AG04449 (cell line): ENCODE measurements at regions of chr4 and their contacts with region 1.

Region 1: DNA sequence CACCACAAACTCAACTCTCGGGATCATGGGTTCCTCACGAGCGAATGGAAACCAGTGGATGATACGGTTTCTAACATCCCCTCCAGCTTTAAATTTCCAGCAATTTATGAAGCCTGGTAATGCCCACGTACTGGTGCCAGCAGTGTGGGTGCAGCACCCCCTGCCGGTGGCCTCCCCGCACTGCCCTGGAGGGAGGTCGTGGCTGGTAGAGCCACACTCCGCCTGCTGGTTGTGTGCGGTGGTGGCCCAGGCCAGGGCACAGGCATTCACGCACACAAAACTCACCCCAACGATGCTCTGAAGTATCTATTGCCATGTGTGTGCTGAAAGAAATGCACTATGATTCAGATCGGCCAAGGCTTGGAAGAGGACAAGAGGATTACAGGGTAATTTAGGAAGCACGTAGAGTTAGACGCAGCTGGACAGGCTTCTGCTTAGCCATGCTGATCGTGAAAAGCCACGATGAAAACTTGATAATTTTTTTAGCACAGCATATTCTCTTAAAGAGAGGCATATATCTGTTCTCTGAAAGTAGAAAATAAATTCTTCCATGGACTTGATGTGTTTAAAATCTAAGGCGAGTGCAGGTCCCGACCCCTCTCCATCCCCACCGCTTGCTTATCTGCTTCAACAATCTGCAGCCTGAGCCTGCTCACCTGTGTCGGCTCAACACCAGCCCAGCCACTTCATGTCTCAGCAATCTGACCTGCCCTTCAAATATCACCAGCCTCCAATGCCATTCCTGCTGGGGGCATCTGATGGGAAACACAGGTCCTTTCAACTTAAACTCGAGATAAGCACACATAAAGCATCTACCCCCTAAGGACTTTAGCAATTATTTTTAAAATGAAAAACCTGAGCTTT is 59.0 kb downstream of the SCD5 start:
- DNase-seq: no peak
- H3K4me3 ChIP-seq: no peak overlapping the region
- CTCF ChIP-seq: peak; percentile 100

Region 2: DNA sequence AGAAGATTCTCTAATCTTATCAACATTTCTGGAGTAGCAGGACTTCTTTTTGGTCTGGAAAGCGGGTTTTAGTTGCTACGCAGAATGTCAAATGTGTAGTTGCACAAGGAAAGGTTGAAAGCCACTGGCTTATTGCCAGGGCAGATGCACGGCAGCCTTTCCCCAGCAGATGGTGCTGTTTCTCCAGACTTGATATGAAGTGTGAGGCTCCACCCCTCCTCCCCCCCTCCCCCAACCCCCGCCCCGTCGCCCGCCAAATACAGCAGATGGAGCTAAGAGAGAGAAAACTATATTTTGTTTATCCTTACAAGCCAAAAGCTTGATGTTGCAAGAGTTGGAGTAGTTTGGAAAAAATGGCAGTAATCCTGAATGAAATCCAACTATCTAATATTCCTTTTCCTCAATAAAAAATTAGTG is 277.1 kb before region 1 on chr4:
- CTCF ChIA-PET with region 1: interaction called, 168 read pairs
- POLR2A ChIA-PET with region 1: no interaction called
- DNase-seq: peak; percentile 34
- H3K4me3 ChIP-seq: no peak overlapping the region
- CTCF ChIP-seq: peak; percentile 81

Region 3: DNA sequence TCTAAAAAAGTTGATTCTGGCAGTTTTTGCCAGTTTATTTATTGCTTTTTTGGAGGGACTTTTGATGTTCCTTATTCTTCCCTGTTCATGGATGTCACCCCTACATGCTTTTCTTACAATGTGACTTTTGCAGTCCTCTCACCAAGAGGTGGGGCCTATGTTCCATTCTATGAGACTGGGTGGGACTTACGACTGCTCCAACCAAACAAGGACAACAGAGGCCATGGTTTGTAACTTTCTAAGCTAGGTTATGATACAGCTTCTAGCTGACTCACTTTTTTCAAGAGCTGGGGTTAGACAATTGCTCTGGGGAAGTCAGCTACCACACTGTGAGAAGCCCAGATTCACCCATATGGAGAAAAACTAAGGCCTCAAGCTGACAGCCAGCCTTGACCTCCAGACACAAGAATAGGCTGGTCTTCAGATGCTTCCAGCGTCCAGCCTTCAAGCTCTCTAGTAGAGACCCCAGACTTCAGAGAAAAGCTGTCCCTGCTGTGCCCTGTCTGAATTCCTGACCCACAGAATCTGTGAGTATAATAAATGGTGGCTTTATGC is 269.7 kb before region 1 on chr4:
- CTCF ChIA-PET with region 1: interaction called, 168 read pairs
- POLR2A ChIA-PET with region 1: no interaction called
- DNase-seq: peak; percentile 42
- H3K4me3 ChIP-seq: no peak overlapping the region
- CTCF ChIP-seq: no peak

Region 4: DNA sequence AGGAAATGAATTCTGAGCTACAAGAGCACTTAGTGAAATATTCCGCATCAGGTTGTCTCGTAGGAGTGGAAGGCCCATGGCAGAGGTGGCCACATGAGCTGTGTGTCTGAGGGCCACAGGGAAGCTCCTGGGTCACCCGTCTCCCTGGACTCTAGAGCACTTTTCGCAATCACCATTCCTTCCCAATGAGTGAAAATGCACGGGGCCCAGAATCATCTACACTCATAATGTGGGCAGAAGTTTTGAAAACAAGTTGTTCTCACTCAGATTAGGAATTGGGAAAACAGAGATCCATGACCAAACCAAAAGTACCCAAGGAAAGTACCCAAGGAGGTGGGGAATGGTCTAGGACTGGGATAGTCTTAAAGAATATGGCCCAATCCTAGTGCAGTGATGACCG is 35.4 kb before region 1 on chr4:
- CTCF ChIA-PET with region 1: interaction called, 11 read pairs
- POLR2A ChIA-PET with region 1: no interaction called
- DNase-seq: no peak
- H3K4me3 ChIP-seq: no peak overlapping the region
- CTCF ChIP-seq: no peak

Region 5: GRCh38 chr4:82721819-82722423 is 17.6 kb before region 1 on chr4:
- CTCF ChIA-PET with region 1: interaction called, 32 read pairs
- POLR2A ChIA-PET with region 1: no interaction called
- DNase-seq: no peak
- H3K4me3 ChIP-seq: no peak overlapping the region
- CTCF ChIP-seq: peak; percentile 51

Region 6: GRCh38 chr4:82728301-82728700 is 11.2 kb before region 1 on chr4:
- CTCF ChIA-PET with region 1: interaction called, 34 read pairs
- POLR2A ChIA-PET with region 1: no interaction called
- DNase-seq: no peak
- H3K4me3 ChIP-seq: no peak overlapping the region
- CTCF ChIP-seq: no peak

Region 7: DNA sequence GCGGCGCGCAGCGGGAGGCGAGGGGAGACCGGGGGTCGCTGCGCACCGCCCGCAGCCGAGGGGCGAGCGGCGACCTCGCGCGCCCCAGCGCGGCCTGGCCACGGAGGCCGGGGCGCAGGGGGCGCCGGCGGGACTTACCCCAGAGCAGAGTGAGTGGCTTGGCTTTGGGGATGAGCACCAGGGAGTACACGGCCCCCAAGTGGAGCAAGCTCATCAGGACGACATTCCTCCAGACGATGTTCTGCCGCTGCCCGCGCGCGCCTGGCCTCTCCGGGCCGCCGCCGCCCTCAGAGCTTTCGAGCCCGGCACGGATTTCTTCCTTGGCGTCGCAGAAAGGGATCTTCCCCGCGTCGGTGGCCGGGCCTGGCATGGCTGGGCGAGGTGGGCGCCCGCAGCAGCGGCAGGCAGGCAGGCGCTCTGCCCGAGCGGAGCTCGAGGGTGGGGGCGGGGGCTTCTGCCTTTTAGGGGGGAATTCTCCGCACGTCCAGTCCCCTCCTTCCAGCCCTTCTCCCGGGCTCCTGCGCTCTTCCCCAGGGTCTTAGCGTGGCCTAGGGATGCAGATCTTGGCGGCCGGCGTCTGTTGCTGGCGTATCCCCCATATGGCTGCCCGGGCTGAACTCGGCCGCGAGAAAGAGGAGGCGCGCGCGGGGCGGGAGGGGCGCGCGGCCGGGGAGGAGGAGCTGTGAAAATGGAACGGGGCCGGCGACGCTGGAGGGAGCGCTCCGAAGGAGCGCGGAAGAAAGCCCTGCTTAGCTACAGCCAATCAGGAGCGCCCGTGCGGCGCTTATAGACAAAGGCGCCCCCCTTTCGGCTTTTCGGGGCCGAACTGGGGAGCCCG is 58.8 kb after region 1 on chr4 and contains the start of gene SCD5:
- CTCF ChIA-PET with region 1: interaction called, 13 read pairs
- POLR2A ChIA-PET with region 1: interaction called, 6 read pairs
- DNase-seq: peak; percentile 34
- H3K4me3 ChIP-seq: peak within 1 kb of the TSS; percentile 81
- CTCF ChIP-seq: no peak

Region 8: DNA sequence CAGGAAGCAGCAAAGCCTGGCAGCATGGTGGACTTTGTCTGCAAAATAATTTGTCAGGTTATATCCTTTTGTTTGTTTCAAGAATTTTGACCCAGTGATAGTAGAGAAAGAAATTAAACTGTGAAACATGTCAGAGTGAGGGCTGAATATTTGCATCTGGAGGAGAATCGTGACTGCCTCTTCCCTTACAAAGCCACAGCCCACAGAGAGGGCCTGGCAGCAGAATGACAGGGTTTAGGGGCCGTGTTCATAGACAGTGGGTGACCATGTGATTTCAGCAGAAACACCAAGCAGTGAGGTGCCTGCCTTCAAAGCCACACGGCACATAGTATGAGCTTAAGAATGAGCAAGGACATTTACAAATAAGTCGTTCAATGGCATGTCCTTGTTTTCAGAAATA is 399.4 kb after region 1 on chr4:
- CTCF ChIA-PET with region 1: no interaction called
- POLR2A ChIA-PET with region 1: no interaction called
- DNase-seq: no peak
- H3K4me3 ChIP-seq: no peak overlapping the region
- CTCF ChIP-seq: no peak